Dorsolateral prefrontal cortex (tissue), 120 donors: ENCODE measurements at regions of chr9 and their contacts with region 1.

Region 1: DNA sequence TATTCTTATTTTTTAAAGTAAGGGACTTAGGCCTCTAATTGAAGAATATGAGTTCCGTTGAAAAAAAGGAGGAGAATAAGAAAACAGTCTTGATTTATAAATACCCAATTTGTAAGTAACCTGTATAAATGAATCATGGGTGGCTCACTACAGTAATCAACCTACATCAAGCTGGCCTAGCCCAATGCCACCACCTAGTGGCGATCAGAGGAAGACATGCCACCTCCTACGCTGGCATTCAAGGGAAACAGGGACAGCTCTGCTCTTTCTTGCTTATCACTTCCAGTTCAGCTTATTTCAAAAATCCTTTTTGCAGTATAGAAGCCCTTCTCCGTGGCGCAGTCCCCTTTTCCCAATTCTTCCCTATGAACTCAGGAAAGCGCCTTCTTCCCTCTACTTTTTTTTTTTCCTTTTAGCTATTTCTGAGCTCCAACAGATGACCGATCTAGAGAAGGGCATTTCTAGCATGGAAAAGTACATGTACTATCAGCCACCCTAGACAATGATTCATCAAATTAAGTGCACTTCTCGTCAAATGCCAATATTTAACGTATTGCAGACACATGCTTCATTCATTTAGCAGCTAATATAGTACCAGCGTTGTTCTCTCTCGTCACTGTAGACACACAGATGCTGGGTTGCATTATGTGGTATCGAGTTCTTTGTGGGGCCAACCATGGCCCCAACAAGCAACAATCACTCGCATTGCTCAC is 28.3 kb downstream of the PTPN3 start:
- DNase-seq: peak; percentile 56 to 88 (median 80)
- H3K4me3 ChIP-seq: peak overlapping the region in 13 of 59 donors; percentile 3 to 41 (median 27)
- H3K27ac ChIP-seq: peak overlapping the region in 46 of 59 donors; percentile 3 to 77 (median 52)
- H3K27me3 ChIP-seq: no peaks in the 10 kb centered on the region
- CTCF ChIP-seq: peak; percentile 70 to 98 (median 92)

Region 2: DNA sequence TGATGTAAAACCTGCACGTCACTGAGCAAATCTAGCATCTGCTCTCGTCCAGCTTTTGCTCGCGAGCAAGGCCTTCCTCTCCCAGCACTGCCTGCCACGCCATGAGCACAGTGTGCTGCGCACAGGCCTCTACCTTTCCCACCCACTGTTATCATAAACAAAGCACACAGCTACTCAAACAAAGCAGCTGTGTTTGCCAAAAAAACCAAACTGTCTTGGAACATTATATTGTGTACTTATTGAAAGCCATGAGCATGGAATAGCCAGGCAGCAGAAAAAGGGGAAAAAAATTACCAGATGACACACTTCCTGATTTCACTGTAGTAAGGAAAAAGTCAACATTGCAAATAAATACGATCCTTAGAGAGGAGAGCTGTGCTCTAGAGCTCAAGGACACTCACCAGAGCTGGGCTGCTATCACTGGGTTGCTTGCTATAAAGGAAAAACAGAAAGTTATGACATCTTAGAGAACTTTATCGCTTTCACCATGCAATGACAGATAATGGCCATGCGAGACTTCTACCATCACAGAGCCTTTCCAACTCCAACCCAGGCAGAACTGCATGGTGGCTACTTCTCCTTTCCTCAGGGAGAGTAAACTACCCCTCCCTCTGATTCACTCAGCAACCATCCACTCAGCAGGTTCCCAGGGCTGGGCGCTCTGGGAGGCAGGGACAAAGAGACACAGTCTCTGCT is 218.6 kb before region 1 on chr9:
- intact Hi-C with region 1: loop called in 1 of 2 experiments (anchors 10 kb)
- DNase-seq: no peak
- H3K4me3 ChIP-seq: no peak overlapping the region
- H3K27ac ChIP-seq: peak overlapping the region in 3 of 59 donors; percentile 8 to 37 (median 29)
- H3K27me3 ChIP-seq: no peaks in the 10 kb centered on the region
- CTCF ChIP-seq: no peak

Region 3: DNA sequence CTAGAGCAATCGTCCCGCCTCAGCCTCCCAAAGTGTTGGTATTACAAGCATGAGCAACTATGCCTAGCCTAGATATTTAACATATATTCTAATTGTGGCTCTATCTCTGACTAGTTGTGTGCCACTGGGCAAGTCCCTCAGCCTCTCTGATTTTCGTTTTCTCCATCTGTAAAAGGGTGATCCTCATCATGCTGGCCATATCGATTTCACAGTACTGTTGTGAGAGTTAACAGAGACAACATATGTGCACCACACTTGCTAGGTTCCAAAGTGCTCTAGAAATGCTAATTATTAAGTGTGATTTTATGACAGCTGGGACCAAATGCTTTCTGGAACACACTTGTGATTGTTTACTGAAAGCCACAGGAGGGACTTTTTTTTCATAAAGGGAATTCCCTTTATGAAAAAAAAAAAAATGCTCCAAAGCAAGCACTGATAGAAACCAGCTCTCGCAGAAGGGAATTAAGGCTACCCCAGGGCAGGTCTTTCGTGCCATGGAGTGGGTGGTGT is 70.5 kb before region 1 on chr9:
- intact Hi-C with region 1: no loop called
- DNase-seq: no peak
- H3K4me3 ChIP-seq: no peak overlapping the region
- H3K27ac ChIP-seq: no peak overlapping the region
- H3K27me3 ChIP-seq: peaks cover 0 to 3% (median 0%) of the 10 kb centered on the region in 45 donors
- CTCF ChIP-seq: no peak

Region 4: GRCh38 chr9:109440797-109441287 is 29.0 kb before region 1 on chr9:
- intact Hi-C with region 1: loop called in 1 of 2 experiments (anchors 2 kb)
- DNase-seq: peak in 3 of 10 donors; percentile 26 to 31 (median 31)
- H3K4me3 ChIP-seq: peak overlapping the region in 5 of 59 donors; percentile 2 to 33 (median 14)
- H3K27ac ChIP-seq: peak overlapping the region in 3 of 59 donors; percentile 22 to 34 (median 28)
- H3K27me3 ChIP-seq: peaks cover 0 to 2% (median 0%) of the 10 kb centered on the region in 45 donors
- CTCF ChIP-seq: peak; percentile 57 to 88 (median 78)

Region 5: DNA sequence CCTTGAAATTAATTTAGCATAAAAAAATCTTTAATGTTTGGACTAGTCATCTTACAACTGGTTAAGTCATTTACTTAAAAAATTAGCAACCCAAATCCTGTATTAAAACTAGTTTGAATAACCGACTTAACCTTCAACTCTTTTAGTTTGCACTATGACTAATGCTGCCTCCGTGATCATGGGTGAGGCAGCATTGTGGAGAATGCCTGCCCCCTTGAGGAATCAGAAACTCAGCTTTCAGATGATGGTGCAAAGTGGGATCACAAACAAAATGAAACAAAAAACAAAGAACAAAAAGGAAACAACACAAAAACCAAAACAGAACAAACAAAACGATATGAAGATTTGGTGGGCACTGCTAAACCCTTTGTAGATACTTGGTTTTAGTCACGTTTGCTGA is 183.2 kb after region 1 on chr9:
- intact Hi-C with region 1: loop called in 1 of 2 experiments (anchors 10 kb)
- DNase-seq: peak in 2 of 10 donors; percentile 53 to 58
- H3K4me3 ChIP-seq: peak overlapping the region in 5 of 59 donors; percentile 9 to 24 (median 9)
- H3K27ac ChIP-seq: peak overlapping the region in 49 of 59 donors; percentile 14 to 86 (median 62)
- H3K27me3 ChIP-seq: no peaks in the 10 kb centered on the region
- CTCF ChIP-seq: peak in 55 of 56 donors; percentile 27 to 86 (median 63)